ENCODE measurements at regions of chrX and their contacts with region 1.

Region 1: GRCh38 chrX:69093960-69094871 is 71.0 kb downstream of the PJA1 start:
- DNase-seq: no peak
- ATAC-seq: no peak

Region 2: DNA sequence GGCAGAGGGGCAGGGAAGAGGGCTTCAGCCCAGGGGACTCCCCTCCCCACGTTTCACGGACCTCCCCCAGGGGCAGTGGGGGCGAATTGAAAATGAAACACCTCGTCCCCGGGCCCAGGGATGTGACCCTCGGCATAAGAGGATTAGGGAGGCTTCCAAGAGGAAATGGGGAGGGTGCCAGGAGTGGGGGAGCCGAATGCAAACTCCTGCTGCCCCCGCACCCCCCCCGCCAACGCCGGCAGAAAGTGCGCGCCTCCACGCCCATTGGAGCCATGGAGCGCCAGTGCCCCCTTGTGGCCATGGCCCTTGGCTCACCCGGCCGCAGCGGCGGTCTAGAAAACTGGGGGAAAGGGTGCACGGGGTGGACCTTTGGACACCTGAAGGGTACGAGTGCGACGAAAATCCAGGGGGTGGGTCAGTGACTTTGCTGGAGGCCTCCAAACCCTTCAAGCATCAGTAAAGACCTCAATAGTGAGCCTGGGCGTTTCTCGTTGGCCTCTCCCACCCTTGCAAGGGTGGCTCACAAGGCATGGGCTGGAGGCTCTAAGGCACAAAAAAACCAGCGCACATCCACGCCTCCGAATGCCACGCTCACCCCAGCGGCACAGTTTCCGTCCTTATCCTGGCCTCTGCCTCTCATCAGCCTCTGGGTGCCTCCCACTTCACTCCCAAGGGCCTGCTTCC is 191.8 kb after region 1 on chrX:
- intact Hi-C with region 1: loop called (anchors 10 kb)
- DNase-seq: peak; percentile 81
- ATAC-seq: peak; percentile 87